ENCODE measurements at regions of chr10 and their contacts with region 1.

Region 1: DNA sequence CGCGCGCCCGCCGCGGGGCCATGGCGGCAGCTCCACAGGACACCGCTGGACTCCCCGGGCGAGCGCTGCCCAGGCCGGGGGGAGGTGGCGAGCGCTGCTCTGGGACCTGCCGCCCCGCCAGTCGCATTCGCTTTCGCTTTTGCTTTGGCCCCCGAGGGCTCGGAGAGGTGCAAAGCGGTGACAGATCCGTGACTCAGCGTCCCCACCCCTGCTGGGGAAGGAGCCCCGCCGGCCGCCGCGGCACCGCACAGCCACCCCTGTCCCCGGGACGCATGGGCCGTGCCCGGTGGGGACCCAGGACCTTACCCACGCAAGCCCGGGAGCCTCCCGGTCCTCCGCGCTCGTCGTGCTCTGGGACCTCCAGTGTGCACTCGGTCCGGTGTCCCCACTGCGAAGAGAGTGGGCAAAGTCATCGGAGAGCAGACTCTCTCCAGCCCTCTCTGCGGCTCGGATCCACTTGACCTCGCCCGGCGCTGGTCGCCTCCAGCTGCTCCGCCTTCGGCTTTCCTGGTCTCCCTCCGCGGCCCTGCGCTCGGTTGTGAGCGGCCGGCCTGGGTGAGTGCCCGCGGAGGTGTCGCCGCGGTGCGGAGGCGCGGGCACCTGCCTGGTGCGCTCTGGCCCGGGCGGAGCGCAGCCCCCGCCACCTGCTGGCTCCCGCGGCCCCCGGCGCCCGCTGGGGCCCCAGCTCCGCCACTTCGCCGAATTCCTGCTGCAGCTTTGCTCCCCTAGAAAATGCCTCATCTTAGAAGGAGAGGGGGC is at the start of gene IL15RA:
- DNase-seq: peak; percentile 78
- H3K4me3 ChIP-seq: peak within 1 kb of the TSS; percentile 90 to 94 (median 93)
- H3K27ac ChIP-seq: no peak within 1 kb of the TSS
- H3K4me1 ChIP-seq: no peaks in the 10 kb centered on the region
- H3K27me3 ChIP-seq: no peaks in the 10 kb centered on the region
- CTCF ChIP-seq: peak in 1 of 2 donors; percentile 29
- total RNA-seq, gene IL15RA: 1.8 to 2.2 TPM

Region 2: GRCh38 chr10:5889624-5890451 is 87.8 kb before region 1 on chr10 and contains the starts of genes ANKRD16 and FBH1:
- CTCF ChIA-PET with region 1: no interaction called
- dilution Hi-C with region 1: no loop called
- in situ Hi-C with region 1: no loop called
- intact Hi-C with region 1: loop called (anchors 5 kb)
- DNase-seq: peak; percentile 99
- H3K4me3 ChIP-seq: peak within 1 kb of the TSS; percentile 84 to 98 (median 85)
- H3K27ac ChIP-seq: peak within 1 kb of the TSS; percentile 19
- H3K4me1 ChIP-seq: peaks cover 24% of the 10 kb centered on the region
- H3K27me3 ChIP-seq: no peaks in the 10 kb centered on the region
- CTCF ChIP-seq: no peak
- total RNA-seq, gene ANKRD16: 8.2 to 8.4 TPM
- total RNA-seq, gene FBH1: 62.7 to 77.3 TPM

Measured in mammary epithelial cell (primary cell).